ENCODE measurements at regions of chr10 and their contacts with region 1.

Region 1: DNA sequence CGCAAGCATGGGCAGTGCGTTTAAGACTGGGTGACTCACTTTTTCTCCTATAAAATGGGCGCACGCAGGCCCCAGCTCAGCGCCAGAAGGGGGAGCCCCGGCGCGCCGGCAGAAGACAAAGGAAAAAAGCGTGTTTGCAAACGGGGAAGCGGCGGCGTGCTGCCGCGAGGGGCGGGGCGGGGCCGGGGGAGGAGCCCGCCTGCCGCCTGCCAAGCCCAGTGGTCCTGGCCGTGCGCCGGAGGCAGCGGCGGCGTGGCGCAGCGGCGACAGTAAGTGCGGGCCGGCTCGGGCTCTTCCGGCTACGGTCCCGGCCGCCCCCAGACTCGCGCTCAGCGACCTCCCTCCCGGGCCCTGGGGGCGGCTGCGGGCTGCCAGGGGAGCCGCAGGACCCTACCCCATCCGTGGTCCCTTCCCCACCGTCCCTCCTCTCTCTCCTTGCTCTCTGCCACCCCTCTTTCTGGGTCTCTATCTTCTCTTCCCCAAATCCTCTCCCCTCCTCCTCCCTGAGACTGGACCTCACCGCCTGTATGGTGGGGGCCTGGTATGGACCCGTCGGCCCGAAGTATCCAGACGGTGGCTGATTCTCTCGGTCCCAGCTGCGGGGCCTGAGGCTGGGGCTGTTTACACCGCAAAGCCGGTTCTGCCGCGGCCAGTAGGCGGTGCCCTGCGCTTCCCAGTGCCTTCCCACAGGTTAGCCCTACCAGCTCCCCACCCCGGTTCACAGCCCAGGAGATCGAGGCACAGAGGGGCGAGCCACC is at the start of gene SLC29A3:
- DNase-seq: peak; percentile 71
- ATAC-seq: peak; percentile 95
- H3K4me3 ChIP-seq: peak within 1 kb of the TSS; percentile 77 to 87 (median 82)
- H3K27ac ChIP-seq: peak within 1 kb of the TSS; percentile 67
- H3K4me1 ChIP-seq: peaks cover 45% of the 10 kb centered on the region
- H3K27me3 ChIP-seq: peaks cover 0 to 12% of the 10 kb centered on the region in 2 experiments; a peak in 1 of 5 replicates
- CTCF ChIP-seq: peak; percentile 98
- EP300 ChIP-seq: no peak
- POLR2A ChIP-seq: peak in 1 of 2 experiments; percentile 74; a peak in 2 of 4 replicates
- RAD21 ChIP-seq: peak; percentile 95
- total RNA-seq, gene SLC29A3: 5.3 and 8.6 TPM in 2 replicates

Region 2: DNA sequence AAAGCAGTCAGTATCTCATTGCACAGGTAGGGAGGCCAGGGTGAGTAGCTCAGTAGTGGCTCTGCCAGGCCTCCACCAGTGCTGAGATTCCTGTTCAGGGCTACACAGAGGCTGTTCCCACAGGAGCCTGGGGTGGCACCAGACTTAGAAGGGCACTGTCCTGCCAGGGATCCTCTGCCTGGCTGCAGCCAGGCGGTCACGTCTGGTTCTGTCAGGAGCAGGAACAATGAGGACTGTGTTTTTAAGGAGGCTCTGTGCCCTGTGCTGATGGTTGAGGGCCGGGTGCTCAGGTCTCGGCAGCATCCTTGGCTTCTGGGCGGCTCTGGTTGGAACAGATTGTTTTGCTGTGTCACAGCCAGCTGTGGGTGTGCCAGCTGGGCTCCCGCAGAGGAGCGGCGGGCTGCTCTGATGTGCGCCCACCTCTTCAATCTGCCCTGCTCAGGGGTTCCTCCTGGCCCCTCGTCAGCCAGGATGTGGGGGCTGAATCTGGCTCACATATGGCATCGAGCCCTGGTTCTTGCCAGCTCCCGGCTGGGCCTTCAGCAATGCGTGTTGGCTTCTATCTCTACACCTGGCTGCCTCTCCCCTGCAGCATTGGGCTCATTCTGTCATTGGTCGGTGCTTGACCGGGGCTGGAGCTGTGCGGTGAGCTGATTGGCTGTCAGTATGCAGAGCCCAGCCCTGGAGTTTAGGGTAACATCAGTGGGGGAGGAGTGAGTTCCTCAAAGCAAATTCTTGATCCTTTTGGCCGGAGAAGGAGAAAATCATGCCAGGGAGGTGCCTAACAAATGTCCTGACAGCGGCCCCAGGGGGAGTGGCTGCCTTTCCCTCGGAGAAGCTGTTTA is 1943.7 kb before region 1 on chr10:
- CTCF ChIA-PET with region 1: no interaction called
- POLR2A ChIA-PET with region 1: no interaction called
- in situ Hi-C with region 1: no loop called
- intact Hi-C with region 1: no loop called
- DNase-seq: no peak
- ATAC-seq: peak; percentile 34; the same call in 2 of the 3 replicates
- H3K4me3 ChIP-seq: no peak overlapping the region
- H3K27ac ChIP-seq: no peak overlapping the region
- H3K4me1 ChIP-seq: no peaks in the 10 kb centered on the region
- H3K27me3 ChIP-seq: peaks cover 2 to 32% of the 10 kb centered on the region in 2 experiments; a peak in 2 of 5 replicates
- CTCF ChIP-seq: no peak
- EP300 ChIP-seq: no peak
- POLR2A ChIP-seq: no peak
- RAD21 ChIP-seq: no peak

Region 3: GRCh38 chr10:71333129-71333887 is 14.1 kb after region 1 on chr10:
- CTCF ChIA-PET with region 1: no interaction called
- POLR2A ChIA-PET with region 1: interaction called, 210 read pairs
- in situ Hi-C with region 1: no loop called
- intact Hi-C with region 1: loop called (anchors 1 kb)
- DNase-seq: no peak
- ATAC-seq: peak; percentile 14
- H3K4me3 ChIP-seq: peak overlapping the region in 2 of 3 experiments; percentile 23 to 51; a peak in 3 of 6 replicates
- H3K27ac ChIP-seq: peak overlapping the region; percentile 92
- H3K4me1 ChIP-seq: peaks cover 86% of the 10 kb centered on the region
- H3K27me3 ChIP-seq: no peaks in the 10 kb centered on the region
- CTCF ChIP-seq: no peak
- EP300 ChIP-seq: no peak
- POLR2A ChIP-seq: no peak
- RAD21 ChIP-seq: no peak

Region 4: GRCh38 chr10:71349401-71350110 is 30.3 kb after region 1 on chr10:
- CTCF ChIA-PET with region 1: no interaction called
- POLR2A ChIA-PET with region 1: interaction called, 23 read pairs
- in situ Hi-C with region 1: no loop called
- intact Hi-C with region 1: no loop called
- DNase-seq: no peak
- ATAC-seq: no peak
- H3K4me3 ChIP-seq: no peak overlapping the region
- H3K27ac ChIP-seq: no peak overlapping the region
- H3K4me1 ChIP-seq: peaks cover 64% of the 10 kb centered on the region
- H3K27me3 ChIP-seq: no peaks in the 10 kb centered on the region
- CTCF ChIP-seq: no peak
- EP300 ChIP-seq: no peak
- POLR2A ChIP-seq: no peak
- RAD21 ChIP-seq: no peak

Region 5: DNA sequence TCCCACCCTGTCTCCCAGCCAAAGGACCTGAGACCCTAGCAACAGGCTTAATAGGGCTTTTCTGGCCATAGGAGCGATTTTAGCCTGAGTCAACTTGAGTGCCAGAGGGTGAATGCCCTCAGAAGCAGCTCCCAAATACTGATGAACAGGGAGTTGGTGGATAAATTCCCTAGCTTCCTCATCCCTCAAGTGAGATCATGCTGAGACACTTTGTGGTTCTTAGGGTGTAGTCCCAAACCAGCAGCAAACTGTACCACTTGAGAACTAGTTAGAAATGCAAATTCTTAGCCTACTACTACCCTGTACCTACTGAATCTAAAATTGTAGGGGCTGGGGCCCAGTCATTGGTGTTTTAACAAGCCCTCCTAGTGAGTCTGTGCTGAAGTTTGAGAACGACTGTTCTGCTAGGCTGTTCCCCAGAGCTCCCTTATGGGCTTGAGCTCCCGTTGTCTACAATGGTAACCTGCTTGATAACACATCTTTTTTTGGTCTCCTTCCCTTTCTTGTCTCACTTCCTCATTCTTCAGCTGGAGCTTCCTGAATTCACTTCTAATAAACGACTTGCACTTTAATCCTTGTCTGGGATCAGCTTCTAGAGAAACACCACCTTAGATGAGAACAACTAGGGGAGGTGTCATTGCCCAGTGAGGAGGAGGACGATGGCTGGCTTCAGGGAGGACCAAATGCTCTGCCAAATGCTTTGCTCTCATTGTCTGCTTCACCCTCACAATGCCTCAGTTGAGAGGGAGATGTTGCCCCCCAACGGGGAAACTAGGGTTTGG is 59.3 kb after region 1 on chr10:
- CTCF ChIA-PET with region 1: interaction called, 9 read pairs
- POLR2A ChIA-PET with region 1: interaction called, 38 read pairs
- in situ Hi-C with region 1: loop called (anchors 5 kb)
- intact Hi-C with region 1: loop called (anchors 1 kb)
- DNase-seq: no peak
- ATAC-seq: no peak
- H3K4me3 ChIP-seq: no peak overlapping the region
- H3K27ac ChIP-seq: no peak overlapping the region
- H3K4me1 ChIP-seq: peaks cover 39% of the 10 kb centered on the region
- H3K27me3 ChIP-seq: peaks cover 0 to under 1% of the 10 kb centered on the region in 2 experiments; a peak in 1 of 5 replicates
- CTCF ChIP-seq: peak; percentile 25; the same call in 1 of the 2 replicates
- EP300 ChIP-seq: no peak
- POLR2A ChIP-seq: no peak
- RAD21 ChIP-seq: no peak

Region 6: GRCh38 chr10:71569775-71570588 is 250.8 kb after region 1 on chr10:
- CTCF ChIA-PET with region 1: interaction called, 29 read pairs
- POLR2A ChIA-PET with region 1: no interaction called
- in situ Hi-C with region 1: loop called (anchors 5 kb)
- intact Hi-C with region 1: loop called (anchors 1 kb)
- DNase-seq: peak; percentile 53
- ATAC-seq: peak; percentile 75
- H3K4me3 ChIP-seq: no peak overlapping the region
- H3K27ac ChIP-seq: no peak overlapping the region
- H3K4me1 ChIP-seq: no peaks in the 10 kb centered on the region
- H3K27me3 ChIP-seq: peaks cover 3 to 27% of the 10 kb centered on the region in 2 experiments; a peak in 3 of 5 replicates
- CTCF ChIP-seq: peak; percentile 82
- EP300 ChIP-seq: no peak
- POLR2A ChIP-seq: no peak
- RAD21 ChIP-seq: peak; percentile 70

Measured in HepG2 (cell line).